Motor neuron (in vitro differentiated cells): ENCODE measurements at regions of chr9 and their contacts with region 1.

Region 1: DNA sequence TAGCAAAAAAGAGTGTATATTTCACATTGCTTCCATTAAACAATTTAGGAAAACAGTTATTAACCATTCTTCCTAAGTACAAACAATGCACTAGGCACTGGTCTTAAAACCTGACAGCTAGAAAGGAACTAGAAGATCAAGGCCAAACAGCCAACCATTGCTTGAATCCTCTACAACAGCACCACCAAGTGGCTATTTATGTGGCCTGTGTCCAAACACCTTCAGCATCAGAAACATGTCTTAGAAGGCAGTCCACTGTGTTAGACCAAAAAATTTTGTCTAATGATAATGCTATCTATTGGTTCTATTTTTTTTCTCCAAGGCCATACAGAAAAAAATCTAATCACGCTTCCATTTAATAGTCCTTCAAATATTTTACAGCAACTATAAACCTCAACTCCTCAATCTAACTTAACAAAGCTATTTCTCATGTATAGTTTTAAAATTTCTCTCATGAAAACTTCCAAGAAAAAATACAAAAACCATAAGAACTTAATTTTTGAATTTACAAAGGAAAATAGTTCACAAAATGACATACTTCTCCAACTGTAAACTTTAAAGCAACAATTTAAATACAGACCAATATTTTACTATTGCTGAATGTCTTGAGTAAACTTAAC is 36.1 kb downstream of the CAAP1 start:
- ATAC-seq: peak; percentile 26 to 82 (median 67)
- H3K4me3 ChIP-seq: no peak overlapping the region
- H3K27ac ChIP-seq: no peak overlapping the region
- H3K4me1 ChIP-seq: no peaks in the 10 kb centered on the region

Region 2: GRCh38 chr9:25964239-25964638 is 892.3 kb before region 1 on chr9:
- in situ Hi-C with region 1: loop called in 2 of 9 experiments (anchors 25 kb)
- ATAC-seq: peak in 5 of 8 experiments; percentile 39 to 99 (median 96)
- H3K4me3 ChIP-seq: no peak overlapping the region
- H3K27ac ChIP-seq: no peak overlapping the region
- H3K4me1 ChIP-seq: no peaks in the 10 kb centered on the region

Region 3: DNA sequence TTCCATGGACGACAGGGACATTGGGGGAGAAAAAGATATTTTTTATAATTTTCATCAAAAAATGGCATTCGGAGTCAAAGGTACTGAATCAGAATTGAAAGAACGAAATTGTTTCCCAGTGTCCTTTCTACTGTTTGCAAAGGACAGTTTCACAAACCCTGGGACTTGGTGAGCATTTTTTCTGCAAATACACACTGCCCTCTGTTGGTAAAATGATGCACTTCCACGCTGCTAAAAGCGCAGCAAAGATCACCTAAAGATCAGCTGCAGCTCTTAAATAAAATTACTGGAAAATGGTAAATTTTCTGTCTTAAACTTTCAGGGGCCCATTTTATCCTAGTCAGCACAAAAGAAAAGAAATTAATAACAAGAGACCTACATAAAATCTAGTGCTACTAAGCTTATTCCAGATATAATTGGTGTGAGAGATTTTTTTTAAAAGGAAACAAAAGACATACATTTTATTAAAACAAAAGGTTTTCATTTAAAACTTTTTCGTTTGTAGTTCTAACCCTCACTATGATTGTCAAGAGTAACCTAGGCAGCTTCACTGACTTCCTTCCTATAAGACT is 530.0 kb before region 1 on chr9:
- in situ Hi-C with region 1: loop called in 1 of 9 experiments (anchors 25 kb)
- ATAC-seq: peak; percentile 72 to 88 (median 82)
- H3K4me3 ChIP-seq: no peak overlapping the region
- H3K27ac ChIP-seq: no peak overlapping the region
- H3K4me1 ChIP-seq: peaks cover 7 to 23% of the 10 kb centered on the region in 2 donors

Region 4: DNA sequence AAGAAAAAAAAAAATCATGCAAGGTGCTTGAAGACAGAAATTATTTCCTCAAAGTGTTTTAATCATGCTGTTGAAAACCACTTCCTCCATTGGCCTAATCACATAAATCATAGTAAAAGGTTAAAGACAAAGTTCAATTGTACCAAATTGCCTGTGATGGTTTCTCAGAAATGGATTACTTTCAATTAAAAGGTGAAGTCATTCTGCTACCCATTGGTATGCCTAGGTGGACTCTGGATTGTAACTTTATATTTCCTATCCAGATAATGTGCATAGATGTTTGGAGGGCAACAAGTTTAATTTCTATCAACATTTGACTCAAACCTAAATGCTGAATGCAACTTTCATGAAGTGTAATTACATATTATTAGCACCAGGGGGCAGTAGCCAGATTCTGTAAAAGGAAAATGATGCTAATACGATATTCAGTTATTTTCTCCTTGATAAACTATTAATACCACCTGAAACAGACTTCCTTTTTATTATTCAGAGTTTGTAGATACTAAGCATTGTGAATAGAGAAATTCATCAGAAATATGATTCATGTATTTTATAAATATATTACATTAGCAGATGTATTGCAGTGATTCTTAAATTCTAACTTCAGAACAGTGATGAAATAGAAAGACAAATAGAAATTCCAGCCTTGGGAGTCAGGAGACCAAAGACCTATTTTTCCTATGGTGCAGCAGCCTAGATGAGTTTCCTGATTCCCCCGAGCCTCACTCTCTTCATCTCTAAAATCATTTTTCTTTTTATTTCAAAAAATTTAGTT is 112.1 kb before region 1 on chr9:
- in situ Hi-C with region 1: loop called in 1 of 9 experiments (anchors 25 kb)
- ATAC-seq: peak in 2 of 8 experiments; percentile 39 to 67
- H3K4me3 ChIP-seq: no peak overlapping the region
- H3K27ac ChIP-seq: no peak overlapping the region
- H3K4me1 ChIP-seq: peaks cover 9 to 13% of the 10 kb centered on the region in 2 donors

Region 5: DNA sequence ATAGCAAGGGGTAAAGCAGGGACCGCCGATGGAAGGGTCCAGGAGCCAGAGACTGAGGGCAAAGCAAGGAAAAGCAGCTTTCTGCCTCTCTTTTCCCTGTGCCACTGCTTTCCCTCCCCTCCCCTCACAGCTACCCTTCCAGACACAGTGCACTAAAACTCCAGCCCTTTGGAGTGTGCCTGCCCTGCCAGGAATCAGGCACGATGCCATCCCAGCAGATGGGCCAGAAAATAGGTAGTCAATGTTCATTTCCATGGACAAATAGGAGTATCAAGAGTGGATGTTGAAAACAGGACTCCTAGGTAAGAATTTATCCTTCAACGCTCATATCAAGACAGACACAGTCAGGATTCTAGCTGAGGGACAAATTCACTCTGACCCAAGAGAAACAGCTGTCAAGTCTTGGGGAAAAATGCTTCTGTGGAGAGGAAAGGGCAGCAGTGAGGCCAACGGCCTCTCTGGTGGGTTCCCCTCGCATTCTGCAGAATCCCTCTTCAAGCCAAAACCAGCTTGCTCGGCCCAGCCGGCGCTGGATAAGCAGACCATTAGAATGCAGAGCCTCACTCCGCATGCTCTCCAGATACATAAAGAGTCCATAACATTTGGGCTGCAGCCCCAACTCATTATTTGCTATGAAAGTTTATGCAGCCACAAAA is 101.9 kb before region 1 on chr9:
- in situ Hi-C with region 1: loop called in 2 of 9 experiments (anchors 10 to 25 kb)
- ATAC-seq: peak in 6 of 8 experiments; percentile 61 to 79 (median 68)
- H3K4me3 ChIP-seq: no peak overlapping the region
- H3K27ac ChIP-seq: peak overlapping the region; percentile 22 to 27
- H3K4me1 ChIP-seq: peaks cover 18 to 23% of the 10 kb centered on the region in 2 donors

Region 6: GRCh38 chr9:26789959-26790358 is 66.6 kb before region 1 on chr9:
- in situ Hi-C with region 1: no loop called
- ATAC-seq: peak; percentile 38 to 72 (median 57)
- H3K4me3 ChIP-seq: no peak overlapping the region
- H3K27ac ChIP-seq: no peak overlapping the region
- H3K4me1 ChIP-seq: no peaks in the 10 kb centered on the region